Heart left ventricle (tissue), 16 donors: ENCODE measurements at regions of chr22 and their contacts with region 1.

Region 1: DNA sequence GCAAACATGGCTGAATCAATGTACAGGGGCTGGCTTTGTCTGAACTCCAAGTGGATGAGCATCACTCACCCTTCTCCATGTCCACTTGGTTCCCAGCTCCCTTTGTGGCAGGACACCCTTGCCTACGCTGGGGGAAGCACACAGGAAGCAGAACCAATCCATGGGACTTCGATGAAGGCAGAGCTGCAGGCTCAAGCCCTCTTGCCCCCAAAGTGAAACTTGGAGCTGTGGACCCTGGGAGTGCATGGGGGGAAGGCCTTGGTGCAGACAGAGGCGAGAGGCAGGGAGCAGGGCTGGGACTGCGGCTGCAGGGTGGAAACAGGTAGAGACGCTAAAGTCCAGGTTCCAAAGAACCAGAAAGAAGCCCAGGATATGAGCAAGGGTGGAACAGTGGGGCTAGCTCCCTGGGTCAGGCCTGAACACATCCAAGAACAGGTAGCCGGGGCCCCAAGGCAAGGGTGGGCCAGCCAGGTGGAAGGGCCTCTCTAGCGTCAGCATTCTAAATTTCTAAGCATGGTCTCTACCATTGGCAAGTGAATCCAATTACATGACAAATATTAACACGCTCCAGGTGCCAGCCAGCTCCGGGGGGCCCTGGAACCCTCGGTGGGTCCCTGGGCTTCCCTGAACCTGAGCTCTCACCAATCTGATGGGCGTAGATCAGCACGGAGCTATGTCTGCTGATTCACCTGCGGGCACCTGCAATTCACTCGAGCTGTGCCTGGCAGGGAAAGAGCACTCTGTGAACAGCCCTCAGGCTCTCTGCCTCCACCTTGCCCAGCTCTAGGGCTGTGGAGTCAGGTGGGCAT is 532.8 kb downstream of the BRD1 start:
- DNase-seq: peak in 1 of 5 donors; percentile 20
- ATAC-seq: no peak
- H3K4me3 ChIP-seq: no peak overlapping the region
- H3K27ac ChIP-seq: no peak overlapping the region
- H3K4me1 ChIP-seq: no peaks in the 10 kb centered on the region
- H3K27me3 ChIP-seq: peaks cover 0 to 7% (median 0%) of the 10 kb centered on the region in 9 donors
- CTCF ChIP-seq: no peak
- POLR2A ChIP-seq: no peak

Region 2: DNA sequence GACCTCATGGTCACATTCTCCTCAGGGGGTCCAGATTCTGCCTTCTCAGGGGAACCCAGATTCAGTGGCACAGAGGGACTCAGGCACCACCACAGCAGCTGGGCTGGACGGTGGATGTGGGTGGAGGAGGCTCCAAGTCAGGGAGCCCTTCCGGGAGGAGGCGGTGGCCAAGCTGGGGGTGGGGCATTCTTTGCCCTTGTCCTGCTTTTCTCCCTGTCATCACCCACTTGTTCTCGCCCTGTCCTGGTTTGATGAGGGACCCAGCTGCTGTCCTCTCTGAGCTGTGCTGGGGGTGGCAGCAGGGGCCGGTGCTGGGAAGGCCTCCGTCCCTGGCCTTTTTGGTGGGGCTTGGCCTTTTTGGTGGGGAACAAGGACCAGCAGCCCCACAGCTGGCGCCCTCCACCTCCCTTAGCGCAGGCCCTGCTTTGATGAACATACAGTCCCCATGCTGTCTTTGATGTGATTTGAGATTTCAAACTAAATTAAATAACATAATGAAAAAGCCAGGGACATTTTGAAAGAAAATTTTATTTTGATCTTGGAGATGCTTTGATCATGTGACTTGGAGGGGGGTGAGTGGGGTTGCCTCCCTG is 635.4 kb before region 1 on chr22:
- intact Hi-C with region 1: loop called in 1 of 10 experiments (anchors 5 kb)
- DNase-seq: peak in 1 of 5 donors; percentile 46
- ATAC-seq: peak in 2 of 4 donors; percentile 46 to 52
- H3K4me3 ChIP-seq: no peak overlapping the region
- H3K27ac ChIP-seq: no peak overlapping the region
- H3K4me1 ChIP-seq: no peaks in the 10 kb centered on the region
- H3K27me3 ChIP-seq: peaks cover 0 to 10% (median 0%) of the 10 kb centered on the region in 9 donors
- CTCF ChIP-seq: no peak
- POLR2A ChIP-seq: no peak